Sciatic nerve (tissue), 2 donors: ENCODE measurements at regions of chr3 and their contacts with region 1.

Region 1: DNA sequence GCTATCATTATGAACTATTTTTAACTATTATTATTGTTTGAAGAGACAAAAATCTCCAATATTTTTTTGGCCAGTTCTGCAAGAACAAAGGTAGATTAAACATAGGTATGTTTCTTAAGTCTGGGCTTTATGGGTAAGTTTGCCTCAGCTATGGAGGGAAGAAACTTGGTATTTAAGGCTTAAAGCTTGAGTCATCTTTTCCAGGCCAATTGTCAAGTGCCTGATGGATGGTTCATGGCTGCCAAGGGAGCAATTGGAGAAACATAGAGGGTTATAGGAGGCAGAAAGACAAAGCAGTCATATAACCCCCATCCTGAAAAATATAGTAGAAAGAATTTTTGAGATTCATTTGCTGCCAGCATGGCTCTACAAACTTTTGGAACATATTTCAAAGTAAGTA is 7.2 kb upstream of the STAC start:
- DNase-seq: no peak
- ATAC-seq: no peak

Region 2: GRCh38 chr3:35422836-35423601 is 950.1 kb before region 1 on chr3:
- intact Hi-C with region 1: loop called (anchors 5 kb)
- DNase-seq: no peak
- ATAC-seq: no peak

Region 3: GRCh38 chr3:36394176-36394575 is 21.1 kb after region 1 on chr3:
- intact Hi-C with region 1: no loop called
- DNase-seq: no peak
- ATAC-seq: no peak

Region 4: GRCh38 chr3:36514171-36514570 is 141.1 kb after region 1 on chr3:
- intact Hi-C with region 1: no loop called
- DNase-seq: no peak
- ATAC-seq: no peak